ENCODE measurements at regions of chr11 and their contacts with region 1.

Region 1: DNA sequence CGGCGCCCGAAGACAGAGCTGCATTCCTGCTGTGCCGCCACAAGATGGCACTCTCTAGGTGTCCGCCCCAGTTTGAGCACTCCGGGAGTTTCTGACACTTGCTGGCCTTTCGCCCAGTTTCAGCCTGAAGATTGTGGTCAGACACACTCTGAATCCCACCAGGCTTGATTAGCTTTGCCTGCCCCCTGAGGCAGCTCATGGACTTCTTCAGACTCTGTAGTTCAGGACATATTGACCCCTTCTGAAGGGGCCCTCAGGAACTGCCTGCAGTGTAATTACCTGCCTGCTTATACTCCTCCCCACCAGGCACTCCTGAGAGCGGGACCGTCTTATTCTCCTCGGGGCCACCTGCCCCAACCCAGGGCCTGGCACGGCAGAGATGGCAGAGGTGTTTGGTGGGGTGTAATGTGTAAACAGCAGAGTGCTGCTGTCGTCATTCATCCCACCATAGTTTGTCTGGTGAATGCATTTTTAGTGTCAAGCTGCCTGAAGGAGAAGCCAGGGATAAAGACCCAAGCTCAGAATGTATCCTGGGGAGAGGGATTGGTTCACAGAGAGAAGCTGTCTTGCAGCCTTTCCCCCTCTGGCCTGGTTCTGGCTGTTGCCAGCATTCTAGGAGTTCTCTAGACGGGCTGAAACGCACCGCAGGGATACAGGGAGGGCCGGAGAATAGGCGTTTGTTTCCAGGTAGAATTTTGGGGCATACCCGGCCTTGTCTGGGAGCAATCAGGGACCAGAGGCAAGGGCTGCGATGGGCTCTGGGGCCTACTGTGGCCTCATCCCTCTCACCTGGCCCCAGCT is 46.4 kb downstream of the EIF3F start:
- DNase-seq: peak; percentile 70
- H3K4me3 ChIP-seq: no peak overlapping the region
- H3K27ac ChIP-seq: no peak overlapping the region
- H3K27me3 ChIP-seq: no peaks in the 10 kb centered on the region
- CTCF ChIP-seq: peak; percentile 89

Region 2: DNA sequence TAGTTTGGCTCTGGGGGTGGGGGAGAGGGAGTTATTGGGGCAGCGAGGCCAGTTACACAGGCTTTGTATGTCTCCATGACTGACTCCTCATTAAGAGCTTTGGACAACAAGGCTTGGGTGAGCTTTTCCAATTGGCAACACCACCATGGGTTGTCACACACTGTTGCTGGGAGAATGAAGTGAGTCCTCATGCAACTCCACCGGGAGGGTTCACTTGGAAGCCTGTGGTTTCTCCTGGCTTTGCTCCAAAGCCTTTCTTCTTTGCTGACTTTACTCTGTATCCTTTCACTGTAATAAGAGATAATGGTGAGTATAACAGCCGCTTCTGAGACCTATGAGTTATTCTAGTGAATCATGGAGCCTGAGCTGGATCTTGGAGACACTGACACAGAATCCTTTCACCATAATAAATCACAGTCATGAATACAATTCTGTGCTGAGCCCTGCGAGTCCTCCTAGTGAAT is 21.5 kb before region 1 on chr11:
- CTCF ChIA-PET with region 1: interaction called, 31 read pairs
- POLR2A ChIA-PET with region 1: no interaction called
- DNase-seq: peak; percentile 69
- H3K4me3 ChIP-seq: no peak overlapping the region
- H3K27ac ChIP-seq: peak overlapping the region; percentile 31
- H3K27me3 ChIP-seq: peaks cover 7% of the 10 kb centered on the region
- CTCF ChIP-seq: no peak

Region 3: DNA sequence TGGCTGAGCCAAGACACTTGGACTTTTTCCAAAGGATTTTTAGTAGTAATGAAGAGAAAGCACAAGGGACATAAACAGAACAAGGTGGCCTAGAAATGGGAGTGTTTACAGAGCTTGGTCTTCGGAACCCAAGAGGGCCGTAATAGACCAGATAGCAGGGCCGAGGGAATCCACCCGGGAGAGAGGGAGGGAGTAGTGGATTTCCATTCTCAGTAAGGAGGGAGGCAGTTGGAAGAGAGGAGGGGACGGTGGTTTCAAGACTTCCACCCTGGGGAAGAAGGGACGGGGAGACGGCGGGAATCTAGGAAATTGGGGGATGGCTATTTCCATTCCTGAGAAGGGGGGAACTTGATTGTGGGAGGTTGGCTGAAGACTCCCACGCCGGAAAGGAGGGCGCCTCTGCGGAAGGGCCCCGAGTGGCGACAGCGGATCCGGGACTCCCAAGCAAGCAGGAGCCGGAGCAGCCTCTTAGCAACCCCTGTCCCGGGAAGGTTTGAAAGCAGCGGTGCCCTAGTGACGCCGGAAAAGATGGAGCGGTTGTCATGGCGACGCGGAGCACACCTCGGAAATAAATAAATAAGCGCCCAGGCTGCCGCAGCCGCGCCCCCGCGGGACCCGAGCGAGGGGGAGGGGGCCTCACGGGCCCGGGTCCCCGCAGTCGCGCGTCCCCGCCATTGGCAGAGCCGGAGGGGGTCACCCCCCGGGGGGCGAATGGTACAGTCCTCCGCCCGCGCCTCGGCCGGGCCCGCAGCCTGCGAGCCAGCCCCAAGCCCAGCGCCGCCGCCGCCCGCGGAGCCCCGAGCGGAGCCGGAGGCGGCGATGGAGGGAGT is 14.8 kb before region 1 on chr11:
- CTCF ChIA-PET with region 1: interaction called, 46 read pairs
- POLR2A ChIA-PET with region 1: interaction called, 3 read pairs
- DNase-seq: peak; percentile 16
- H3K4me3 ChIP-seq: peak overlapping the region; percentile 70
- H3K27ac ChIP-seq: no peak overlapping the region
- H3K27me3 ChIP-seq: peaks cover 2% of the 10 kb centered on the region
- CTCF ChIP-seq: no peak

Region 4: DNA sequence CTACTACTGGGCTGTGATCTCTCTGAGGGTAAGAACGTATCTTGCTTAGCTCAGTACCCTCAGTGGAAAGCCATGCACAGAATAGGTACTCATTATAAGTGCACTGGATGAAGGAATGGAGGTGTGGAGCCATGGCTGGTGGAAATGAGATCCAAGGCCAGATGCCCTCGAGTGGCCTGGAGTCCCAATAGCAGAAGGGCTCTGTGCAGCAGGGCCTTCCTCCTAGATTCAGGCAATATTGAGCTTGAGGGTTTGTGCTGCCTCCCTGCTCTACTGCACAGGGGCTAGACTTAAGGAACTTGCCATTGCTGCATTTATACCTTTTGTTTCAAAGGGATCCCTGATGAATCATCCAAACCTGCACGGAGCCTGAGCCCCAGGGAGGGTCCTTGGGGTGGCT is 13.9 kb after region 1 on chr11:
- CTCF ChIA-PET with region 1: interaction called, 46 read pairs
- POLR2A ChIA-PET with region 1: no interaction called
- DNase-seq: no peak
- H3K4me3 ChIP-seq: no peak overlapping the region
- H3K27ac ChIP-seq: no peak overlapping the region
- H3K27me3 ChIP-seq: peaks cover 2% of the 10 kb centered on the region
- CTCF ChIP-seq: no peak

Region 5: DNA sequence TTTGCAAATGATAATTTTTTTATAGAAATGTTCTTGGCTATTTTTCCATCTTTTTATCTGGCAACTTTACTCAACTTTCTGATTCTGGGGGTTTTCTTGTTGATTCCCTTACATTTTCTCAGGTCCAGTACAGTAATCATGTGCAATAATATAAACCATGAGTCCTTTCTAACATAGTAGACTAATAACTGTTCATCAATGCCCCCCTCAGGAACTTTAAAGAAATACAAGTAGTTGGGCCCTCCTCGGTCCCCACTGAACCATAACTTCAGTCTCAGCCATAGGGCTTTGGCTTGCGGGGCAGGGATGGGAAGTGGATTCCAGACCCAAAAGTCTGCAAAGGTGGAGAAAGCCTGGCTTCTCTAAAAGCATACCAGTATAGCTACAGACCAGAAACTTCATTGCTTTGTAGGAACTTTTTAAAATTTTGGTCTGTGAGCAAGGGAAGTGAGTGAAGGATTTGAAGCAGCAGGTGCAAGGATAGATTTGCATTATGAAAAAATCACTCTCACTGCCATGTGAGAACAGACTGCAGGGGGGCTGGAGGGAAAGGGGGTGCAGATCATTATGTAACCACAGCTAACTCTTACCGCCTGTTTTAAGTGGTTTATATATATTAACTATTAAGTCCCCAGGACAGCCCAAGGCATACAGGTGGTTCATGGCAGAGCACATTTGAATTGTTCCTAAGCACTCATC is 37.1 kb after region 1 on chr11:
- CTCF ChIA-PET with region 1: interaction called, 24 read pairs
- POLR2A ChIA-PET with region 1: no interaction called
- DNase-seq: no peak
- H3K4me3 ChIP-seq: no peak overlapping the region
- H3K27ac ChIP-seq: no peak overlapping the region
- H3K27me3 ChIP-seq: peaks cover 2% of the 10 kb centered on the region
- CTCF ChIP-seq: peak; percentile 53

Region 6: GRCh38 chr11:8080674-8081590 is 47.4 kb after region 1 on chr11 and contains the start of gene TUB:
- CTCF ChIA-PET with region 1: interaction called, 384 read pairs
- POLR2A ChIA-PET with region 1: no interaction called
- DNase-seq: no peak
- H3K4me3 ChIP-seq: peak within 1 kb of the TSS; percentile 65
- H3K27ac ChIP-seq: peak within 1 kb of the TSS; percentile 21
- H3K27me3 ChIP-seq: peaks cover 2% of the 10 kb centered on the region
- CTCF ChIP-seq: no peak
- polyA plus RNA-seq, gene TUB: 13.9 and 14.7 TPM in 2 replicates

Region 7: DNA sequence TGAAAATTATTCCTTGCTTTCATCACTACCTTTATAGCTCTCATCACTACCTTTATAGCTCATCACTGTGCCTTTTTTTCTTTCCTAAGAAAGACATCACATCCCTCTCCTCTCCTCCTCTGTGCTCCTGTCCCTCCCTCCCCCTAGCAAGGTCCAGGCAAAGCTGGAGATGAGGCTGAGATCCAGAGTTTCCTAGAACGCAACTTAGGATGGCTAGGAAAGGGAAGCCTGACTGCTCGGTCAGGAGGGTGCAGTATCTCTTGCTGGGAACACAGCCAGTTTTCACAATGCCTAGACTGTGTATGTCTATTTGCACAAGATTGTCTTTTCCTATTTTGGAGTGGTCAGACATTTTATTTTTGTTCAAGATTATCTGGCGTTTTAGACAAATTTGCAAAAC is 72.2 kb after region 1 on chr11:
- CTCF ChIA-PET with region 1: interaction called, 384 read pairs
- POLR2A ChIA-PET with region 1: no interaction called
- DNase-seq: no peak
- H3K4me3 ChIP-seq: no peak overlapping the region
- H3K27ac ChIP-seq: no peak overlapping the region
- H3K27me3 ChIP-seq: peaks cover 3% of the 10 kb centered on the region
- CTCF ChIP-seq: no peak